GM10248 (cell line): ENCODE measurements at regions of chr9 and their contacts with region 1.

Region 1: GRCh38 chr9:127970401-127971313 is 10.1 kb downstream of the EEIG1 start:
- DNase-seq: peak; percentile 94
- CTCF ChIP-seq: no peak

Region 2: DNA sequence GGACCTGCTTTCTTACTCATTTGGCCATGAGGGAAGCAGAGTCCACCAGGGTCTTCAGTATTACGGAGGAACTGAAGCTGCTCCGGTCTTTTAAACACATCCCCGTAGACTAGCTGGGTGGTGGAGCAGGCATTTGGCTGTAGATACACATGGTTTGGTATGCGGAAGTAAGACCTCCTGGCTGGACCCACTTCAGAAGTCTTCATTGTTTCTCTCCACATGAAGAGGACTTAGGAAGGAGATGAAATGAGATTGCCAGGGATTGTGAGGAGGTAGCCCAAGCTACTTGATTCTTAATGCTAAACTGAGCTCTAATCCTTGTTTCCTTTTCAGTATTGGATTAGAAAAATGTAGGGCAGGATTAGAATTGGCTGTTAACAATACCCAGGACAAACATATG is 325.7 kb before region 1 on chr9:
- CTCF ChIA-PET with region 1: no interaction called
- POLR2A ChIA-PET with region 1: no interaction called
- DNase-seq: no peak
- CTCF ChIP-seq: no peak

Region 3: GRCh38 chr9:127980706-127981558 is 10.3 kb after region 1 on chr9 and contains the start of gene EEIG1:
- CTCF ChIA-PET with region 1: interaction called, 3 read pairs
- POLR2A ChIA-PET with region 1: interaction called, 14 read pairs
- DNase-seq: peak; percentile 97
- CTCF ChIP-seq: no peak

Region 4: DNA sequence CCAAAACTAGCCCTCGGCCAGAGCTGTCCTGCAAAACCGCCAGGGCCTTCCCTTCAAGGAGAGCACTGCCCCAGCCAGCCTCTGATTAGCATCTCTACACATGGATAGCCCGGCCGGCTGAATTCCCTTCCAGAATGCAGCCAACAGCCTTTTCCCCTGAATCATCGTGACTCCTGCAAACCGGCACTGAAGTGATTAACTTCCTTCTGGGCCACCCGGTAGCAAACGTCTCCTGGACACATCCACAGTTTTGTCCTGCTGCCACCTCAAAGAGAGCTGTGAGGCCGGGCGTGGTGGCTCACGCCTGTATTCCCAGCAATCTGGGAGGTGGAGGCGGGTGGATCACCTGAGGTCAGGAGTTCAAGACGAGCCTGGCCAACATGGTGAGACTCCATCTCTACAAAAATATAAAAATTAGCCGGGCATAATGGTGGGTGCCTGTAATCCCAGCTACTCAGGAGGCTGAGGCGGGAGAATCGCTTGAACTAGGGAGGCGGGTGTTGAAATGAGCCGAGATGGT is 31.2 kb after region 1 on chr9:
- CTCF ChIA-PET with region 1: no interaction called
- POLR2A ChIA-PET with region 1: no interaction called
- DNase-seq: no peak
- CTCF ChIP-seq: no peak